Naive thymus-derived CD8-positive, alpha-beta T cell (primary cell): ENCODE measurements at regions of chr9 and their contacts with region 1.

Region 1: DNA sequence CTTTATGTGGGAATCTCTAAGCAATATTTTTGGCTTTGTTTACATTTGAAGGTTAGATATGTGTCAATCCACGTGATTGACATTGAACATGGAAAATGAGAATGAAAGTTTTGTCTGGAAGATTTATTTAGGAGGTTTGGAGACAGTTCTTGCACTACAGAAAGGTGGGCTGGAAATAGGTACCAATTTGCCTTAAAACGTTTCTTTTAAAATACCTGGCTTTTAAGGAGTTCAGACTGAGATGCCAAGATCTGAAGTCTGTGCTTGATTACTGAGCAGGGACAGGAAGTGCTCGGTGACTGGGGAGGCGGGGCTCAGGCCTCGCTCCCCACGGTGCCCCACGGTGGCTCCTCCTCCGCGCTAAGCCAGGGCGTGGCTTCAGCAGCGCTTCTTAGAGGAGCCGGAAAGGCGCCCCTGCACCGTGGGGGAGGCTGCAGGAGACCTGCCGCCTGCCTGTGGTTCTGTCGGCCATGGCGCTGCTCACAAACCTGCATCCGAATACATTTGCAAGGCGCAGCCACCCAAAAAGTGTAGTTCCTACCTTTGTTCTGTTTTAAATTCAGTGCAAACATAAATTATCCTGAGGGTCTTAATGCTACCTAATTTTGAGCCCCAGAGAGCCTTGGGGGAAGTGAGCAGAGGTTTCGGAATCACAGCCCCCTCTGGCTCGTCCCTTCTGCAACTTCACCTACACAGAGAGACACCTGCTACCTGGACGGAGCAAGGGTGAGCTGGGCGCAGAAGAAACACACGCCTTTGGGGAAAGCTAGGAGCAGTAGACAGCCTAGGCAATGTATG is 49.2 kb downstream of the USP20 start:
- DNase-seq: peak; percentile 89 to 97 (median 96)
- ATAC-seq: peak; percentile 48 to 55
- H3K4me3 Mint-ChIP-seq: peak overlapping the region; percentile 86 to 98 (median 93)
- H3K27ac Mint-ChIP-seq: peak overlapping the region; percentile 97 to 100 (median 99)
- H3K4me1 Mint-ChIP-seq: peaks cover 35 to 61% (median 57%) of the 10 kb centered on the region in 4 donors
- H3K27me3 Mint-ChIP-seq: peaks cover 0 to 3% (median 0%) of the 10 kb centered on the region in 5 donors

Region 2: DNA sequence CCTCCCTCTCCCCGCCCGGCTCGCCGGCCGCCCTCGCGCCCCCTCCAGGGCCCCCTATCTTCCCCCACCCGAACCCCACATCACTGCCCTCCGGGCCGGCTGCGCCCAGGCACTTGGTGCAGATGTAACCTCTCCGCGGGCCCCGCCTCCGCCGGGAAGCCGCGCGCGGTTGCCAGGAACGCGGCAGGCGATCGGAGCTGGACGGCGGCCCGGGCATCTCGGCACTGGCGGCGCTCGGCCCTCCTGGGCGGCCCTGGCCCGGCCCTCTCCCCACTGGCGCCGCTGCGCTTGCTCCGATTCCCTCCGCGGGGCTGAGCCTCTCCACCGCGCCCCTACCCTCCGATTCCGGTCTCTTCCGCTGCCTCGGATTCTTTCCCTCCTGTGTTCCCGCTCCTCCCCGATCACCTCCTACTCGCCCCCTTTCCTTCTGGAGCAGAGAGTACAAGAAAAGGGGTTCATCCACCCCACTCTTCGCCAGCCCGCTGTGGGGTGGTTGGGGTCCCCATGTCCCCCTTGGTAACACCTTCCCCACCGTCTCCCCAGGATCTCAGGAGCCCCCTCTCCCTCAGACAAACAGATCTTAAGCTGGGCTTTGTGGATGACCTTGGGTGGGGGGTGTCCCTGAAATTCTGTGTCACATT is 334.1 kb before region 1 on chr9:
- POLR2A ChIA-PET with region 1: no interaction called
- DNase-seq: peak in 1 of 10 donors; percentile 24
- ATAC-seq: peak; percentile 51 to 71
- H3K4me3 Mint-ChIP-seq: peak overlapping the region; percentile 41 to 88 (median 72)
- H3K27ac Mint-ChIP-seq: peak overlapping the region in 1 of 10 donors; percentile 76
- H3K4me1 Mint-ChIP-seq: peaks cover 8 to 12% (median 9%) of the 10 kb centered on the region in 4 donors
- H3K27me3 Mint-ChIP-seq: peaks cover 11 to 39% (median 31%) of the 10 kb centered on the region in 5 donors

Region 3: GRCh38 chr9:129835021-129835871 is 49.2 kb before region 1 on chr9 and contains the starts of genes C9orf78 and USP20:
- POLR2A ChIA-PET with region 1: interaction called, 142 read pairs
- DNase-seq: peak; percentile 93 to 99 (median 98)
- ATAC-seq: peak; percentile 87 to 89
- H3K4me3 Mint-ChIP-seq: peak within 1 kb of the TSS; percentile 95 to 100 (median 97)
- H3K27ac Mint-ChIP-seq: peak within 1 kb of the TSS; percentile 90 to 99 (median 99)
- H3K4me1 Mint-ChIP-seq: peaks cover 29 to 67% (median 63%) of the 10 kb centered on the region in 4 donors
- H3K27me3 Mint-ChIP-seq: no peaks in the 10 kb centered on the region
- polyA plus RNA-seq, gene C9orf78: 191 to 242 (median 222) TPM
- polyA plus RNA-seq, gene USP20: 37.1 to 76.4 (median 49.4) TPM

Region 4: GRCh38 chr9:129868916-129869486 is 15.4 kb before region 1 on chr9:
- POLR2A ChIA-PET with region 1: interaction called, 253 read pairs
- DNase-seq: peak; percentile 72 to 96 (median 94)
- ATAC-seq: peak; percentile 83 to 90
- H3K4me3 Mint-ChIP-seq: peak overlapping the region; percentile 19 to 79 (median 64)
- H3K27ac Mint-ChIP-seq: peak overlapping the region; percentile 85 to 96 (median 94)
- H3K4me1 Mint-ChIP-seq: peaks cover 32 to 87% (median 78%) of the 10 kb centered on the region in 4 donors
- H3K27me3 Mint-ChIP-seq: no peaks in the 10 kb centered on the region

Region 5: DNA sequence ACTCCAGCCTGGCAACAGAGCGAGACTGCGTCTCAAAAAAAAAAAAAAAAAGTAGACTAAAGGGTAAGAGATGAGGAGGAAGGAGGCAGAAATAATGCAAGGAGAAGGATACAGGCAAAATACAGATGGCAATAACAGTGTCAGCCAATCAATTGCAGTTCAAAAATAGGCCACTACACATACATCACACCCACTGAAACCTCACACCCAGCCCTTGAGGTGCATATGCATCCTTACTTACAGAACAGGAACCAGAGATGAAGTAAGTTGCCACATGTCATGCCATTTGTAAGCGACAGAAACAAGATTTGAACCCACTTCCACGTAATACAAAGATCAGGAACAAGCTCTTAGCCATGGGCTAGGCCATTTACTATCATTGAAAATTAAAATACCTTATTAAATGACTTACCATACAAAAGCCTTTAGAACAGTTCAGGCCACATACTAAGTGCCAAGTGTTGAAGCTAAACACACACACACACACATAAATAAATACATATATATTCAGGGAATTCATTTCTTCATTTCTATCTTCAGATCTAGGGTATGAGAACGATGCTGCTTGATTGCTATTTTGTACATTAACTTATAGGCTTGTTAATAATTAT is 60.2 kb after region 1 on chr9:
- POLR2A ChIA-PET with region 1: interaction called, 12 read pairs
- DNase-seq: peak in 9 of 10 donors; percentile 24 to 77 (median 61)
- ATAC-seq: peak; percentile 86 to 93
- H3K4me3 Mint-ChIP-seq: peak overlapping the region in 9 of 10 donors; percentile 26 to 75 (median 61)
- H3K27ac Mint-ChIP-seq: peak overlapping the region; percentile 75 to 94 (median 91)
- H3K4me1 Mint-ChIP-seq: peaks cover 23 to 64% (median 57%) of the 10 kb centered on the region in 4 donors
- H3K27me3 Mint-ChIP-seq: no peaks in the 10 kb centered on the region

Region 6: DNA sequence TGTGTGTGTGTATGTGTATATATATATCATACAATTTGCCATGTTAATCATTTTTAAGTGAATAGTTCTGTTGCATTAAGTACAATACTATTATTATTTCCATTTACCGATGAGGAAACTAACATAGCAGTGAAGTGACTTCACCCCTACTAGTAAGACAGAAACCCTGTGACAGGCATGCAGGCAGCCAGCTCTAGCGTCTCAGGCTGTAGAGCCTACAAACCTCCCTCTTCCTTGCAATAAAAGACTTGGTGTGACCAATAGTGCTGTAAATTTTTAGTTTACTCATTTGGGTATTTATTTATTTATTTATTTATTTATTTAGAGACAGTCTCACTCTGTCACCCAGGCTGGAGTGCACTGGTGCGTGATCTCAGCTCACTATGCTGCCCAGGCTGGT is 133.8 kb after region 1 on chr9:
- POLR2A ChIA-PET with region 1: no interaction called
- DNase-seq: no peak
- ATAC-seq: no peak
- H3K4me3 Mint-ChIP-seq: no peak overlapping the region
- H3K27ac Mint-ChIP-seq: peak overlapping the region in 9 of 10 donors; percentile 14 to 86 (median 46)
- H3K4me1 Mint-ChIP-seq: peaks cover 21 to 77% (median 60%) of the 10 kb centered on the region in 4 donors
- H3K27me3 Mint-ChIP-seq: no peaks in the 10 kb centered on the region

Region 7: DNA sequence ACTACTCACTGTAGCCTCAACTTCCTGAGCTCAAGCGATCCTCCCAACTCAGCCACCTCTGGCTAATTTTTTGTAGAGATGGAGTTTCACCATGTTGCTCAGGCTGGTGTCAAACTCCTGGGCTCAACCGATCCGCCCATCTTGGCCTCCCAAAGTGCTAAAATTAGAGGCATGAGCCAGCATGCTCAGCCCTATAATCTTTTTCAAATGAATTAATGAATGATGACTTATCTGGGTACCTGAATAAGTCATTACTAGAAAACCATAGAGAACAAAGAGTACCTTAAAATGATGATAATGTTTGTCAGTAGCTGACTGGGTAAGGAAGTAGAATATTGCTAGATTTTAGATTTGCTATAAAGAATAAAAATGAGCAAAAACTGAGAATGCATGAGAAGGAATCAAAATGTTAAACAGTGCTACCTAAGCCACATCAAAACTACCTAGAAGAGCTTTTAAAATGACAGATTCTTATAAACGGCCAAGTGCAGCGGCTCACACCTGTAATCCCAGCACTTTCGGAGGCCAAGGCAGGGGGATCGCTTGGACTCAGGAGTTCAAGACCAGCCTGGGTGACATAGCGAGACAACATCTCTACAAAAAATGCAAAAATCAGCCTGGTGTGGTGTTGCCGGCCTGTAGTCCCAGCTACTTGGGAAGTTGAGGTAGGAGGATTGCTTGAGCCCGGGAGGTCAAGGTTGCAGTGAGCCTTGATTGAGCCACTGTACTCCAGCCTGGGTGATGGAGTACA is 145.0 kb after region 1 on chr9:
- POLR2A ChIA-PET with region 1: interaction called, 14 read pairs
- DNase-seq: no peak
- ATAC-seq: peak in 1 of 2 donors; percentile 10
- H3K4me3 Mint-ChIP-seq: peak overlapping the region; percentile 50 to 83 (median 70)
- H3K27ac Mint-ChIP-seq: peak overlapping the region; percentile 74 to 93 (median 87)
- H3K4me1 Mint-ChIP-seq: peaks cover 41 to 99% (median 91%) of the 10 kb centered on the region in 4 donors
- H3K27me3 Mint-ChIP-seq: no peaks in the 10 kb centered on the region

Region 8: DNA sequence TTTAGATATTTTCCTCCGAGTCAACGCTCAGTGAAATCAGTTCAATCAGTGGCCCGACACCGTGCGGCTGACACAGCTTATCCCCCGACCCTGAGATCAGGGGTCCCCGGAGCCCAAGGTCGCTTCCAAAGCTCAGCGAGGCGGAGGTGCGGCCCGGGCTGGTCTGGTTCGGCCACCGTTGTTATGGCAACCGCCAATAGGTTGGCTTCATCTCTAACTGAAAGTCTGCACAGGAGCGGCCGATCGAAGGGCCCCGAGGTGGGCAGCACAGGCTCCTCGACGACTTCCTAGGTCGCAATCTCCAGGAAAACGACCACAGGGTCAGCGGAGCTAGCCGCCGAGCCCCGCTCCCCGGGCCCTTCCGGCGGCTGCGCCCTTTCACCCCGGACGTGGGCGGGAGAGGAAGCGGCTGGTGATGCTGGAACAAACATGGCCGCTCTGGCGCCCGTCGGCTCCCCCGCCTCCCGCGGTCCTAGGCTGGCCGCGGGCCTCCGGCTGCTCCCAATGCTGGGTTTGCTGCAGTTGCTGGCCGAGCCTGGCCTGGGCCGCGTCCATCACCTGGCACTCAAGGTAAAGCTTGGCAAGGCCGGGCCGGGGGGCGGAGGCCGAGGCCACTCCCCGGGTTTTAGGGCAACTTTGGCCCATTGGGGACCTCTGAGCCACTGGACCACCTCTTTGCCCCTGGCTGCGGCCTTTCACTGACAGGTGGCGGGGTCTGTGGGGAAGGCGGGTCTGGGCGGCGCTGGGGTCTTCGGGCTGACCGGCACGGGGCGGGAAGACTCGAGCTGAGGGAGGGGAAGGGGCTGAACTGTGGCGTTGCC is 169.3 kb after region 1 on chr9 and contains the start of gene GPR107:
- POLR2A ChIA-PET with region 1: interaction called, 23 read pairs
- DNase-seq: peak; percentile 52 to 85 (median 71)
- ATAC-seq: peak; percentile 94
- H3K4me3 Mint-ChIP-seq: peak within 1 kb of the TSS; percentile 89 to 95 (median 92)
- H3K27ac Mint-ChIP-seq: peak within 1 kb of the TSS; percentile 91 to 96 (median 94)
- H3K4me1 Mint-ChIP-seq: peaks cover 8 to 52% (median 34%) of the 10 kb centered on the region in 4 donors
- H3K27me3 Mint-ChIP-seq: no peaks in the 10 kb centered on the region
- polyA plus RNA-seq, gene GPR107: 1.4 to 3.2 (median 2.2) TPM